Heart right ventricle (tissue), 16 donors: ENCODE measurements at regions of chr4 and their contacts with region 1.

Region 1: GRCh38 chr4:165457793-165458192 is 79.0 kb downstream of the CPE start:
- DNase-seq: no peak
- ATAC-seq: no peak
- H3K4me3 ChIP-seq: no peak overlapping the region
- H3K27ac ChIP-seq: no peak overlapping the region
- H3K4me1 ChIP-seq: peaks cover 0 to 14% (median 0%) of the 10 kb centered on the region in 9 donors
- H3K27me3 ChIP-seq: no peaks in the 10 kb centered on the region
- CTCF ChIP-seq: no peak

Region 2: GRCh38 chr4:165394275-165394674 is 63.5 kb before region 1 on chr4:
- intact Hi-C with region 1: loop called in 1 of 10 experiments (anchors 2 kb)
- DNase-seq: no peak
- ATAC-seq: no peak
- H3K4me3 ChIP-seq: no peak overlapping the region
- H3K27ac ChIP-seq: no peak overlapping the region
- H3K4me1 ChIP-seq: no peaks in the 10 kb centered on the region
- H3K27me3 ChIP-seq: no peaks in the 10 kb centered on the region
- CTCF ChIP-seq: no peak